Activated CD4-positive, alpha-beta memory T cell treated with anti-CD3 and anti-CD28 coated beads for 36 hours (primary cell): ENCODE measurements at regions of chr6 and their contacts with region 1.

Region 1: DNA sequence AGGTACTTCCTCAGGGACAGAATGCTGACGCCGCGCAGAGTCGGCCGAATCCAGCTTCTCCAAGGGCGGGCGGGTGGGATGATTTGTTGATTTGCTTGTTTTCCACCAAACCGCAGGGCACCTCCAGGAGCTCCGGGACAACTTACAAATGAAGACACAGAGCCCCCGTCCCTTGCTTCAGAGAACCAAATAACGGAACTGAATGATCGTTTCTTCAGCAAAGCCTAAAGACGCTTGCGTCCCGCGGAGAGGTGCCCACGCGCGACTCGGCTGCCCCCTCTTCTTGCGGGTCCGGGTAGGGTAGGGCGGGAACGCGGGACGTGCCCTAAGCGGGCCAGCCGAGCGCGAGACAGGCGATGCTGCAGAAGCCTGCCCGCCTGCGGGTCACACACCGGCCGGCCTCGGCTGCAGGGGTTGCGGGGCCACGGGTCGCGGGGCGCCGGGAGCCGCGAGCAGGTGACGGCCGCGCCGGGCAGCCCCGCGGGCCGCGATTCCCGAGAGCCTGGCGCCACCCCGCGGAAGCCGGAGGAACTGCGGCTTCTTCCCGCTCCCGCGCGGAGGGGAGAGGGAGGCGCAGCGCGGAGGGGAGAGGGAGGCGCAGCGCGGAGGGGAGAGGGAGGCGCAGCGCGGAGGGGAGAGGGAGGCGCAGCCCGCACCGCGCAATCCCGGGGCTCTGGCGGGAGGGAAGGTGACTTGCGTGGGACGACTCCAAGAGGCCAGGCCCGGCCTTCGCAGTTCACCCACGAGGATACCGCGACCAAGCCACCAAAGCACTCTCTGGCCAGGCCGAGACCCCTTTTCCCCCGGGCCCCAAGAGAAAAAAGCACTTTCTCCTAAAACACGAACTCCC is 7.7 kb upstream of the FOXF2 start:
- DNase-seq: peak; percentile 72
- H3K4me3 Mint-ChIP-seq: no peak overlapping the region
- H3K27ac Mint-ChIP-seq: no peak overlapping the region
- H3K4me1 Mint-ChIP-seq: peaks cover 31% of the 10 kb centered on the region
- H3K27me3 Mint-ChIP-seq: peaks cover 70% of the 10 kb centered on the region

Region 2: GRCh38 chr6:797479-798077 is 584.1 kb before region 1 on chr6:
- CTCF ChIA-PET with region 1: interaction called, 18 read pairs
- POLR2A ChIA-PET with region 1: no interaction called
- intact Hi-C with region 1: loop called (anchors 1 kb)
- DNase-seq: peak; percentile 40
- H3K4me3 Mint-ChIP-seq: no peak overlapping the region
- H3K27ac Mint-ChIP-seq: no peak overlapping the region
- H3K4me1 Mint-ChIP-seq: no peaks in the 10 kb centered on the region
- H3K27me3 Mint-ChIP-seq: peaks cover 48% of the 10 kb centered on the region

Region 3: DNA sequence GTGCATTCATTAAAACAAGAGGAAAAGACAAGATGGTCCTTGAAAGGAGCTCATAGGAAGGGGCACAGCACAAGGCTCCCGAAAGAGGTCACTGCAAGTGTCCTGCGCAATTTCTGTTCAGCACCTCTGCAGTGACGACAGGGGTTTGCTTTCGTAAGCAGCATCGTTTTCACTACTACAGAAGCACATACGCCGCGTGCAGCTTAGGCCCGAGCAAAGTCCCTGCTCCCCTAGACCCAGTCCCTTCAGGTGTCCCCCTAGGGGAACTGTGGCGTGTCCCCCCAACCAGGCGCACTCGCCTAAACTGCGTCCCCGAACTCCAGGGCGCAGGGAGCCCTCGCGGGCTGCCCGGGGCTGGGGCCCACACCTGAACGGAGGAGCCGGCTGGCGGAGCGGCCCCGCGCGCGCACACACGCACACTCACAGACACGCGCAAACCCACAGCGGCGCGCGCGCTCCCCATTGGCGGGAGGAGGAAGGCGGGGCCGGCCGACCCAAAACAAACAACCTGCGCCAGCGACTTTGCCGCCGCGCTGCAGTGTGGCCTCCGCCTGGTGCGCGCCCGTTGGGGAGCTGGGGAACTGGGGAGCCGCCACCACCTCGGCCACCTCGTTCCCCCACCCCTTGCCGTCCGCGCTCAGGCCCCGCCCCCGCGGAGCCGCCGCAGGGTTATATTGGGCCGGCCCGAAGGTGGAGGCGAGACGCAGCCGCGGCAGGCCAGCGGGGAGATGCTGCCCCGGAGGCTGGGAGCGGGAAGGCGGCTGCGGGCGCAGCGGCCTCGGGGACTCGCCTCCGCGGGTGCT is 70.1 kb before region 1 on chr6 and contains the start of gene FOXQ1:
- CTCF ChIA-PET with region 1: interaction called, 3 read pairs
- POLR2A ChIA-PET with region 1: no interaction called
- intact Hi-C with region 1: loop called (anchors 2 kb)
- DNase-seq: peak; percentile 16
- H3K4me3 Mint-ChIP-seq: peak within 1 kb of the TSS; percentile 49
- H3K27ac Mint-ChIP-seq: no peak within 1 kb of the TSS
- H3K4me1 Mint-ChIP-seq: peaks cover 30% of the 10 kb centered on the region
- H3K27me3 Mint-ChIP-seq: peaks cover 61% of the 10 kb centered on the region
- total RNA-seq, gene FOXQ1: not detected